ENCODE measurements at regions of chr20 and their contacts with region 1.

Region 1: DNA sequence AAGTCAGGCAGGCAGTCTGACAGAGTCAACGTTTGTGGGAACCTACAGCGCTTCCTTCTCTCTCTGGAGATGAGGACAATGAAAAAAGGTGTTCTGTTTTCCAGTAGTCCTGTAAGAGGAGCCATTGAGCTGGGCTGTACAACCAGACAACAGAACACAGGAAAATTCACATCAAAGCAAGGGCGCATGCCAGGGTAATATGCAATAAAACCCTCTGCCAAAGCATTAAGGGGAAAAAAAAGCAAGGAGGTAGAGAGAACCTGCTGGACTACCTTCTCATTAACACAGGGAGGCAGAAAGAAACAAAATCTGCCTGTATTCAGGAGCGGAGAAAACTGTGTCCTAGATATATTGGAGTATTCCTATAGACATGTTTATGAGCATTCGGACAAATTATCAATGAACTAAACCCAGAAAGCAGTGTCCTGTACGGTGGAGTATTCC is 1.3 kb downstream of the RNF24 start:
- DNase-seq: peak; percentile 62 to 85 (median 78)
- ATAC-seq: peak; percentile 64
- H3K4me3 ChIP-seq: no peak overlapping the region
- H3K27ac ChIP-seq: peak overlapping the region; percentile 47 to 87 (median 83)
- H3K4me1 ChIP-seq: peaks cover 24% of the 10 kb centered on the region
- H3K27me3 ChIP-seq: no peaks in the 10 kb centered on the region
- CTCF ChIP-seq: peak; percentile 35 to 88 (median 84)
- POLR2A ChIP-seq: no peak

Region 2: GRCh38 chr20:3888622-3889488 is 125.2 kb before region 1 on chr20 and contains the start of gene PANK2:
- intact Hi-C with region 1: no loop called
- DNase-seq: peak; percentile 98 to 99 (median 98)
- ATAC-seq: peak; percentile 98
- H3K4me3 ChIP-seq: peak within 1 kb of the TSS; percentile 88 to 94
- H3K27ac ChIP-seq: peak within 1 kb of the TSS; percentile 80 to 95 (median 90)
- H3K4me1 ChIP-seq: peaks cover 43% of the 10 kb centered on the region
- H3K27me3 ChIP-seq: no peaks in the 10 kb centered on the region
- CTCF ChIP-seq: peak in 6 of 7 experiments; percentile 18 to 57 (median 45)
- POLR2A ChIP-seq: peak; percentile 84 to 90 (median 84)
- total RNA-seq, gene PANK2: 17.9 to 21.8 TPM

Region 3: GRCh38 chr20:4067600-4068261 is 53.7 kb after region 1 on chr20:
- intact Hi-C with region 1: loop called (anchors 5 kb)
- DNase-seq: no peak
- ATAC-seq: no peak
- H3K4me3 ChIP-seq: no peak overlapping the region
- H3K27ac ChIP-seq: no peak overlapping the region
- H3K4me1 ChIP-seq: peaks cover 14% of the 10 kb centered on the region
- H3K27me3 ChIP-seq: no peaks in the 10 kb centered on the region
- CTCF ChIP-seq: no peak
- POLR2A ChIP-seq: no peak

Region 4: GRCh38 chr20:4089756-4090487 is 75.9 kb after region 1 on chr20:
- intact Hi-C with region 1: loop called (anchors 5 kb)
- DNase-seq: no peak
- ATAC-seq: no peak
- H3K4me3 ChIP-seq: no peak overlapping the region
- H3K27ac ChIP-seq: no peak overlapping the region
- H3K4me1 ChIP-seq: peaks cover 7% of the 10 kb centered on the region
- H3K27me3 ChIP-seq: no peaks in the 10 kb centered on the region
- CTCF ChIP-seq: no peak
- POLR2A ChIP-seq: no peak